ENCODE measurements at regions of chr2 and their contacts with region 1.

Region 1: DNA sequence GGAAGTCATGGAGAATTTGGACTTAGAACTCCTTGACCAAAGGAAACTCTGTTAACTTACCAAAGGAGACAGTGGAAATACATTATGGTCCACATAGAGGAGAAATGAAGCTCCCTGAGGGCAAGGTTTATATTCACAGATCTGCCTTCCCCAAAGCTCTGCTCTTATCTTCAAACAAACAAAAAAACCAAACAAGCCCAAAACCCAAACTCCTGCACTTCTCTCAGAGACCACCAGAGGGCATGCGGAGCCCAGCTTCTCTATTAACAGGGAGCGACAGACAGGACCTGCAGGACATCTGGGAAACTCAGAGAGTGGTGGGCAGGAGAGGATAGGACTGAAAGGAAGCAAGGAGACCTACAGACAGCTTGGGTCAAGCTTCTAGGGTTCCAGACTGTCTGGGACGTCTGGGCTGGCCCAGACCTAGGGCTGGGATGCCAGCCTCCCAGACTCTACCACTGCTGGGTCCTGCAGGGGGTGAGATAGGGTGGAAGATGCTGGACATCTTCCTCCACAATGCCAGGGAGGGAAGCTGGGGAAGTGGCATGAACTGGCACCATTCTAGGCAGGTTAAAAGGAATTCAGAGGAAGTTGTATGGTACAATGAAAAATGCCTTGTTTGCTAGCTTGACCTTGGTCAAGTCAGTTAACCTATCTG is 4.0 kb upstream of the WNT10A start:
- DNase-seq: peak; percentile 48
- H3K4me3 Mint-ChIP-seq: no peak overlapping the region
- H3K27ac Mint-ChIP-seq: no peak overlapping the region
- H3K4me1 Mint-ChIP-seq: peaks cover 16% of the 10 kb centered on the region
- H3K27me3 Mint-ChIP-seq: peaks cover 73% of the 10 kb centered on the region

Region 2: DNA sequence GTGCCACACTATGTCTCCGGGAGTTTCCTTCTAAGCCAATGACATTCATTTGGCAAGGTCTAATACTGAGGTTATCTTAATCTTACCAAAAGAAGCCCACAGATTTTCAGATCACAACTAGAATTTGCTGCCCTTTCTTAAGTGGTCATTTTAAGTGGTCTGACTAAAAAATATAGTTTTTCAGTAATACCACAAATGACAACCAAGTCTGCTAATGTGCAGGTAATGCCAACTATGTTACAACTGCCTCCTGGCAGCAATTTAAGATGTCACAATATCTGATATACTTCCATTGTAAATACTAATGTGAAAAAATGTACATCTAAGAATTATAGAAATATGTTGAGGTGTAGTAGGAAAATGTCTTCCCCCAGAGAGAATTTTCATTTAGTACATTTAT is 357.8 kb before region 1 on chr2:
- intact Hi-C with region 1: no loop called
- DNase-seq: no peak
- H3K4me3 Mint-ChIP-seq: no peak overlapping the region
- H3K27ac Mint-ChIP-seq: peak overlapping the region; percentile 32
- H3K4me1 Mint-ChIP-seq: peaks cover 23% of the 10 kb centered on the region
- H3K27me3 Mint-ChIP-seq: no peaks in the 10 kb centered on the region

Region 3: GRCh38 chr2:218806346-218806978 is 70.2 kb before region 1 on chr2:
- intact Hi-C with region 1: no loop called
- DNase-seq: no peak
- H3K4me3 Mint-ChIP-seq: no peak overlapping the region
- H3K27ac Mint-ChIP-seq: no peak overlapping the region
- H3K4me1 Mint-ChIP-seq: no peaks in the 10 kb centered on the region
- H3K27me3 Mint-ChIP-seq: peaks cover 5% of the 10 kb centered on the region

Region 4: GRCh38 chr2:218962859-218963492 is 86.3 kb after region 1 on chr2:
- intact Hi-C with region 1: loop called (anchors 2 kb)
- DNase-seq: peak; percentile 33
- H3K4me3 Mint-ChIP-seq: no peak overlapping the region
- H3K27ac Mint-ChIP-seq: no peak overlapping the region
- H3K4me1 Mint-ChIP-seq: no peaks in the 10 kb centered on the region
- H3K27me3 Mint-ChIP-seq: peaks cover 48% of the 10 kb centered on the region

Measured in activated T-helper 1 cell treated with anti-CD3 and anti-CD28 coated beads, Interleukin-12 subunit alpha, Interleukin-12 subunit beta, Interleukin-2, Interleukin-4 antibody, amounts not matched to agents 30 ng/mL and 10 ng/mL and 1 ng/mL, durations not matched to agents 14 hours and 24 hours and 36 hours (primary cell).